A673 (cell line): ENCODE measurements at regions of chr9 and their contacts with region 1.

Region 1: GRCh38 chr9:35996358-35996975 is 38.5 kb upstream of the OR2S2 start:
- DNase-seq: no peak
- H3K4me3 ChIP-seq: no peak overlapping the region
- H3K27ac ChIP-seq: no peak overlapping the region
- H3K4me1 ChIP-seq: no peaks in the 10 kb centered on the region
- H3K27me3 ChIP-seq: peaks cover 48% of the 10 kb centered on the region
- CTCF ChIP-seq: no peak

Region 2: GRCh38 chr9:35686222-35687203 is 310.0 kb before region 1 on chr9:
- CTCF ChIA-PET with region 1: interaction called, 12 read pairs
- POLR2A ChIA-PET with region 1: no interaction called
- intact Hi-C with region 1: no loop called
- DNase-seq: no peak
- H3K4me3 ChIP-seq: no peak overlapping the region
- H3K27ac ChIP-seq: no peak overlapping the region
- H3K4me1 ChIP-seq: peaks cover 25% of the 10 kb centered on the region
- H3K27me3 ChIP-seq: no peaks in the 10 kb centered on the region
- CTCF ChIP-seq: no peak